ENCODE measurements at regions of chr20 and their contacts with region 1.

Region 1: GRCh38 chr20:4813863-4814695 is 92.4 kb downstream of the PRND start:
- DNase-seq: no peak
- ATAC-seq: peak; percentile 75

Region 2: DNA sequence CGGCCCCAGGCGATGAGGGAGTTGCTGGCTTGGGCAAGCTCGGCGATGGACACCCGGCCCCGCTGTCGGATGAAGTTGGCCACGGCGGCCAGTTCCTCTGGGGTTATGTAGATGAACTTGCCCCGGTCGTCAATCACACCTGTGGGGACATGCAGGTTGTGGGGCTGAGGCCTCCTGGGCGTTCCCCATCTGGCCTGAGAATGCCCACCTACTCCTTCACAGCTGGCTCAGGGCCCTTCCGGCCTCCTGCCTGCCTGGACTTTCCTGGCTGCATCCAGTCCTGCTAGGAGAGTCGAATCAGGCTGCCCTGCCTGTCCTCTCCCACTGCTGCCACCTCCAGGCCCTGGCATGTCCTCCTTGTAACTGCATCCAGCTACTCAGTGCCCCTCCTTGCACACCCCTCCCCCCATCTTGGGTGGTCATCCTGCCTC is 1623.4 kb before region 1 on chr20:
- intact Hi-C with region 1: no loop called
- DNase-seq: no peak
- ATAC-seq: peak; percentile 16

Region 3: GRCh38 chr20:5001174-5002076 is 187.3 kb after region 1 on chr20 and contains the start of gene SLC23A2:
- intact Hi-C with region 1: no loop called
- DNase-seq: peak; percentile 66
- ATAC-seq: peak; percentile 48
- total RNA-seq, gene SLC23A2: 75.9 TPM

Region 4: DNA sequence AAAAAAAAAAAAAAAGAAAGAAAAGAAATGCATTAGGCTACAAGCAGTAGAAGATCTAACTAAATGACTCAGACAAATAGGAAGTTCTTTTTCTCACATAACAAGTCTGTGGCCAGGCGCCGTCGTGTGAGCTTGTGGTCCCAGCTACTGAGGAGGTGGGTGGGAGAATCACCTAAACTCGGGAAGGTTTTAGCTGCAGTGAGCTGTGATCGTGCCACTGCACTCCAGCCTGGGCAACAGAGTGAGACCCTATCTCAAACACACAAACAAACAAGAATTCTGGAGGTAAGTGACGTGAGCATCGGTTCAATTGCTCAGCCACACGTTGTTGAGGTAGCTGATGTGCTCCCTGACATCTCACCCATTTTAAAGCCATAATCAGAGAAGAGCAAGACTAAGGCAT is 225.2 kb after region 1 on chr20:
- intact Hi-C with region 1: loop called (anchors 5 kb)
- DNase-seq: no peak
- ATAC-seq: no peak